ENCODE measurements at regions of chr2 and their contacts with region 1.

Region 1: GRCh38 chr2:118202707-118203303 is 114.5 kb downstream of the INSIG2 start:
- DNase-seq: no peak

Region 2: GRCh38 chr2:118046634-118047210 is 156.1 kb before region 1 on chr2:
- intact Hi-C with region 1: loop called in 1 of 2 experiments (anchors 10 kb)
- DNase-seq: no peak

Measured in posterior vena cava (tissue), 2 donors.